Thyroid gland (tissue), 4 donors: ENCODE measurements at regions of chr1 and their contacts with region 1.

Region 1: GRCh38 chr1:41795205-41795762 is 123.4 kb downstream of the HIVEP3 start:
- DNase-seq: no peak
- H3K4me3 ChIP-seq: no peak overlapping the region
- H3K27ac ChIP-seq: no peak overlapping the region
- H3K4me1 ChIP-seq: no peaks in the 10 kb centered on the region
- H3K27me3 ChIP-seq: no peaks in the 10 kb centered on the region
- CTCF ChIP-seq: peak in 1 of 6 experiments; percentile 13
- POLR2A ChIP-seq: no peak

Region 2: DNA sequence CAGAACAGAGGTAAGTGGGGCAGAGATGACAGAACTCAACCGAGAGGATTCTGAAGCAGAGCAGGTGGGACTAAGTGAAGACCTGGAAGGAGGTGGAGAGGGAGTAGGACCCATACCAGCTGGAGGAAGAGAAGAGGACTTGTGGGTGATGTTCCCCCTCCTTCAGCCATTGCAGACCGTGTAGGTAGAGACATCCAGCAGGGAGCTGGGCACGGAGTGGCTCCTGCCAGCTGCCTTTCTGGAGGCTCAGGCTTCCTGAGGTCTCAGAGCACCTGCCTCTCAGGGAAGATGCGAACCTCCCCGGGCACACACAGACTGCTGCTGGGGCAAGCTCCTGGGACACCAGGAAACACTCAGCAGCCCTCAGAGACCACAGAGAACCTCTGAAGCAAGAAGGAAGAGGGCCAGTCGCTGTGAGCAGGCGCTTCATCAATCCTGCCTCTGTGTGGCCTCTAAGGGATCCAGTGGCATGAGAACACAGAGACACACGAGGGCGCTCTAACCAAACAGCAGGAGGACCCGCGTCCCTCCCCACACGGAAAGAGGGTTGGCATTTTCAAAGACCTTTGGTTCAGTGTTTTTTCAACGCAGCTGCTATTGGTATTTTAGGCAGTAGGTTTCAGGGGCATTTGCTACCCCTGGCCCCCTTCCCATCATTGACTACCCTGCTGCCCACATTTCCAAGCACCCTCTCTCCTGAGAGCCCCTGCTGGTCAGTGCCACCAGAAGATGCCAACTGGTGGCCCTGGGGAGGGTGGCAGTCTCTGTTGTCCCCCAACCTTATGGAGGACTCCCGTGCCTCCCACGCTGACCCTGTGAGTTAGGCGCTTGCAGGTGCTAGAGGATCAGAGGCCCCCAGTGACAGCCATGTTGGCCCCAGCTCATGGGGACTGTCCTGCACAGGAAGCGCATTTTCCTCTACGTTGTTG is 221.2 kb before region 1 on chr1:
- intact Hi-C with region 1: loop called (anchors 10 kb)
- DNase-seq: peak; percentile 85 to 90
- H3K4me3 ChIP-seq: no peak overlapping the region
- H3K27ac ChIP-seq: peak overlapping the region in 1 of 3 donors; percentile 3
- H3K4me1 ChIP-seq: peaks cover 22 to 29% of the 10 kb centered on the region in 2 donors
- H3K27me3 ChIP-seq: no peaks in the 10 kb centered on the region
- CTCF ChIP-seq: peak; percentile 71 to 94 (median 90)
- POLR2A ChIP-seq: no peak

Region 3: GRCh38 chr1:41868599-41868998 is 73.3 kb after region 1 on chr1:
- intact Hi-C with region 1: no loop called
- DNase-seq: no peak
- H3K4me3 ChIP-seq: no peak overlapping the region
- H3K27ac ChIP-seq: no peak overlapping the region
- H3K4me1 ChIP-seq: peaks cover 0 to 8% of the 10 kb centered on the region in 2 donors
- H3K27me3 ChIP-seq: no peaks in the 10 kb centered on the region
- CTCF ChIP-seq: no peak
- POLR2A ChIP-seq: no peak